ENCODE measurements at regions of chr3 and their contacts with region 1.

Region 1: GRCh38 chr3:42190701-42191462 is 75.1 kb downstream of the CCK start:
- DNase-seq: no peak

Region 2: DNA sequence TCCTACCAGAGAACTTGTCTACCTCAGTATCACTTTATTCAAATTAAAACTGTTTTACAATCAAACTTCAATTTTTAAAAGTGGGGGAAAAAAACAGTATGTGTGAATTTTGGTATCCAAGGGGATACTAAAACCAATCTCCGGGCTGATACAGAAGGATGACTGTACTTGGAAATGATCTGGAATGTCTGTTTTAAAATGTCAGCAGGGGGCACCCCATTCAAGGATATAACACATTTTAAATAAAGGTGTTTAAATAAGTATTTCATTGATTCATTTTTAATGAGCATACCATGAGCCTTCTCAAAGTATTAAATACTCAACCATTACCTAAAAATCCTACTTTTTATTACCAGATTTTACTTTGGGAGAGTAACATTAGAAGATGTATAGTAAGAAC is 296.9 kb before region 1 on chr3:
- intact Hi-C with region 1: loop called in 1 of 2 experiments (anchors 10 kb)
- DNase-seq: no peak

Region 3: GRCh38 chr3:41900265-41900664 is 290.6 kb before region 1 on chr3:
- intact Hi-C with region 1: loop called (anchors 10 kb)
- DNase-seq: no peak